ENCODE measurements at regions of chr2 and their contacts with region 1.

Region 1: DNA sequence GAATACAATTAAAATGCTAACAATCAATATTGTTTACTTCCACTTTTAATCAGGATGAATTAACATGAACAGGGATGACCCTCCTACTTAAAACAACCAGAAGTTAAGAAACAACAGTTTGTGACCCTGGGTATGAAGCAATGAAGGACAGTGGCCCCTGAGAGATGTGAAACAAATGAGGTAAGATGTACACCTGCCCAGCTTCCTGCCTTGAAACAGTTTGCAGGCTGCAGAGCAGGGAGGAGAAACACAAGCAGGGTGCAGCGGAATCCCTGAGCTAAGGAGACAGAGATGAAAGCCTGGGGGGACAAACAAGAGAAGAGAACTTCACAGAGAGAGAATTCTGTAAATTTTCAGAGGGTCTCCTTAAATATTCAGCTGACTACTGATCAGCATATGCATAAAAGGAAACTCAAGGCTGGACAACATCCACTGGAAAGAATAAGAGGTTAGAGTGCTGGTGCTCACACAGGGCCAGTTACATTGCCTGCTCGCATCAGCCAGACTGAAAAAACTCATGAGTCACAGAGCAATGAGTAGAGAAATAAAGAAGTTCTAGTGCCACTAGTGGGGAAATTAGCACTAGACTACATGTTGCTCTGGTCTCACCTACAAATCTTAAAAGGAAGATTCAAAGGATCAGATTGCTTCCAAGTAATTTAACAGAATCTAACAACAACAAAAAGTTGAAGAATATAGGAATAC is 106.4 kb downstream of the PID1 start:
- DNase-seq: no peak

Region 2: DNA sequence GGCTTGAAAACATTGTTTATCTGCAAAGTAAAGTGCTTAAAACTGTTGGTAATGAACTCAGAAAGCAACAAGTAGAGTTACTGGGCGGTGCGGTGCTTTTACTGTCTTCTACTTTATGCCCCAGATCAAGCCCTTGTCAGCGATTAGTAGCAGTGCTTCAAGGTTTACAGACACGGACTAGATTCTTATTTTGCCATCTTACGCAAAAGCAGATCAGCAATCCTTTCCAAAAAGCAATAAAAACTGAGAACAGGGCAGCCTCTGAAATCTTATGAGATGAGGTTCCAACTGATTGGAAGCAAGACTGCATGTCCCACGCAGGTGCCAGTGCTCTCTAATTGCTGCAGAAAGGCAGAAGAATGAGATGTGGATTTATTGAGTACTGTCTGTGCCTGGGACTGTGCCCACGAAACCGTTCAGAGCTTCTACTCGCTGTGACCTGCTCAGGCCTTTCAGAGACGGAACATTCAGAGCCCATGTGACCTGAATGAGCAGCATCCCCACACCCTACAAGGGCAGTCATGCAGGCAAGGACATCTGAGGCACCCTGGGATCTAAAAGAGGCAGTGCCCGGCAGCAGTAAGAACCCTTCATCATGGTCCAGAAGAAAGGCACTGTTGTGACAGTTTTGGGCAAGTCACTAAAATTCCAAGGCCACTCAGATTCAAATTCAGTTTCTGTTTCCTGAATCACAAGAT is 1984.6 kb before region 1 on chr2:
- intact Hi-C with region 1: loop called in 1 of 2 experiments (anchors 5 kb)
- DNase-seq: no peak

Region 3: DNA sequence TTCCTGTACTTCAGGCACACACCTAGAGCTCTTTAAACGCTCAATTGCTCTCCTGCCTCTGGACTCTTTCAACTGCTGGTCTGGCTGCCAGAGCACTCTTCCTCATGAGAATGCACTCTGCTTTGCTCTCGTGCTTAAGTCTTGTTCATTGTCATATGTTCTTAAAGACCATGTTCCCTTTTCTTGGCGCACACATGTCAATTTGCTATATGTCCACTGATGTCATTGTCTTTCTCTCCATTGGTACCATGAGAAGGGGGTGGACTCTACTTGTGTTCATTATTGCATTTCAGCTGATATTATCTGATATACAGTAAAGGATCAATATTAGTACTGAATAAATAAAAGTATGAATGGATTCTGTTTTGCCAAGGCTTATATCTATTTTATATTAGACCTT is 1000.0 kb before region 1 on chr2:
- intact Hi-C with region 1: no loop called
- DNase-seq: no peak

Region 4: DNA sequence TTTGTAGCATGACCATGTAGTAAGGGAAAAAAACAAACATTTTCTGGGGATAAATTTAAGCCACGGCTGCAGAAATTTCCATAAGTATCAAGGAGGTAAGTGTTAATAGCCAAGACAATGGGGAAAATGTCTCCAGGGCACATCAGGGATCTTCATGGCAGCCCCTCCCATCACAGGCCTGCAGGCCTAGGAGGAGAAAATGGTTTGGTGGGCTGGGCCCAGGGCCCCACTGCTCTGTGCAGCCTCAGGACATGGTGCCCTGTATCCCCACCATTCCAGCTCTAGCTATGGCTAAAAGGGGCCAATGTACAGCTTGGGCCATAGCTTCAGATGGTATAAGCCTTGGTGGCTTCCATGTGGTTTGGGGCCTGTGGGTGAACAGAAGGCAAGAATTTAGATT is 165.4 kb before region 1 on chr2:
- intact Hi-C with region 1: no loop called
- DNase-seq: no peak

Measured in posterior vena cava (tissue), 2 donors.